Endothelial cell of umbilical vein (primary cell): ENCODE measurements at regions of chr2 and their contacts with region 1.

Region 1: GRCh38 chr2:119264781-119265692 is 41.4 kb downstream of the STEAP3 start:
- DNase-seq: peak; percentile 49
- H3K4me3 ChIP-seq: no peak overlapping the region
- H3K27ac ChIP-seq: no peak overlapping the region
- H3K4me1 ChIP-seq: no peaks in the 10 kb centered on the region
- H3K27me3 ChIP-seq: no peaks in the 10 kb centered on the region
- CTCF ChIP-seq: peak; percentile 80 to 88
- POLR2A ChIP-seq: no peak

Region 2: GRCh38 chr2:119011162-119011909 is 253.7 kb before region 1 on chr2:
- CTCF ChIA-PET with region 1: no interaction called
- POLR2A ChIA-PET with region 1: no interaction called
- dilution Hi-C with region 1: no loop called
- intact Hi-C with region 1: loop called (anchors 10 kb)
- DNase-seq: peak; percentile 10
- H3K4me3 ChIP-seq: no peak overlapping the region
- H3K27ac ChIP-seq: no peak overlapping the region
- H3K4me1 ChIP-seq: no peaks in the 10 kb centered on the region
- H3K27me3 ChIP-seq: no peaks in the 10 kb centered on the region
- CTCF ChIP-seq: peak; percentile 31 to 64
- POLR2A ChIP-seq: no peak

Region 3: GRCh38 chr2:119234377-119235019 is 30.5 kb before region 1 on chr2:
- CTCF ChIA-PET with region 1: interaction called, 22 read pairs
- POLR2A ChIA-PET with region 1: no interaction called
- dilution Hi-C with region 1: no loop called
- intact Hi-C with region 1: loop called (anchors 1 kb)
- DNase-seq: peak; percentile 30
- H3K4me3 ChIP-seq: no peak overlapping the region
- H3K27ac ChIP-seq: no peak overlapping the region
- H3K4me1 ChIP-seq: no peaks in the 10 kb centered on the region
- H3K27me3 ChIP-seq: no peaks in the 10 kb centered on the region
- CTCF ChIP-seq: peak; percentile 43 to 58
- POLR2A ChIP-seq: no peak